Adrenal gland (tissue), 19 donors: ENCODE measurements at regions of chr17 and their contacts with region 1.

Region 1: DNA sequence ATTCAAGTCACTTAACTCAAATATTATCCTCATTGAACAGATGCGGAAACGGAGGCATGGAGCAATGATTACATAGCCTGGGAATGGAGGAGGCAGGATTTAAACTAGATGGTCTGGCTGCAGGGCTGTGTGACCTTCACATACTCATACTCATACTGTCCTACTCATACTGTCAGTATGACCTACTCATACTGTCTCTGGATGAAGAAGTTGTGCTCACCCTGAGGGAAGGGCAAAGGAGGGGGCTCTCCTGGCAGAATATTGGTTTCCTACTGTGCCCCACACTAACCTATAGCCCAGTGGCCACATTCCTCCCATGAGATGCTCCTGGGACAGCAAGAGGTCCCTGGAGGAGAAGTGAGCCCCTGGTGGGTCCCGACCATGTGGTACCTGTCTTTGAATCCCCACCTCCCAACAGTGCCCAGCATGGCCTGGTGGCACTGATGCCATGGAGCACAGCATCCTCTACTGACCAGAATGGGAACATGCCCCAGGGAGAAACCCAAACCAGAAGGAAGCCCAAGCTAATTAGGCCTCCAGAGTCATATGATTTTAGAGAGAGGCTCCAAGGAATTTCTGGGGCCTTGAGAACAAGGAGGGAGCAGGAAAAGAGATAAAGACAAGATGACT is 197.3 kb upstream of the SDK2 start:
- DNase-seq: no peak
- H3K4me3 ChIP-seq: no peak overlapping the region
- H3K27ac ChIP-seq: no peak overlapping the region
- H3K4me1 ChIP-seq: no peaks in the 10 kb centered on the region
- H3K27me3 ChIP-seq: no peaks in the 10 kb centered on the region
- CTCF ChIP-seq: peak in 3 of 6 experiments; percentile 28 to 47 (median 41)
- POLR2A ChIP-seq: no peak

Region 2: DNA sequence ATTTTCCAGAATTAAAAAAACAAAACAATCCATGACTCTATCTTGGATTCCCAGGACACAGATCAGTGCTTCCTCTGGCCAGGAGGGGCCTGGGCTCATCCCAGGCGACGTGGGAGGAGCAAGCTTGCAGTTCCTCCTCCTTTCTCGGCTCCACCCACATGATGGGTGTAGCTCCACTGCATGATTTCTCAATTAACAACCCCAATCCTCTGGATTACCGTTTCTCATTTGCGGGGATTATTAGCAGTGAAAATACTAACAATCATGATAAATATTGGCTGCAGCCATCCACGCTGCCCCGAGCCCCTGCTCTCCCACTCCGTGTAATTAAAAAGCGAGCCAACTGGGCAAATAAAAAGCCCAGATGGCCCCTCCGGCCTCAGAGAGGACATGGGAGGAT is 150.9 kb before region 1 on chr17:
- intact Hi-C with region 1: no loop called
- DNase-seq: no peak
- H3K4me3 ChIP-seq: no peak overlapping the region
- H3K27ac ChIP-seq: no peak overlapping the region
- H3K4me1 ChIP-seq: no peaks in the 10 kb centered on the region
- H3K27me3 ChIP-seq: no peaks in the 10 kb centered on the region
- CTCF ChIP-seq: no peak
- POLR2A ChIP-seq: no peak

Region 3: GRCh38 chr17:73782641-73783381 is 58.7 kb before region 1 on chr17:
- intact Hi-C with region 1: loop called in 1 of 2 experiments (anchors 10 kb)
- DNase-seq: no peak
- H3K4me3 ChIP-seq: no peak overlapping the region
- H3K27ac ChIP-seq: no peak overlapping the region
- H3K4me1 ChIP-seq: no peaks in the 10 kb centered on the region
- H3K27me3 ChIP-seq: peaks cover 9% of the 10 kb centered on the region
- CTCF ChIP-seq: no peak
- POLR2A ChIP-seq: no peak

Region 4: DNA sequence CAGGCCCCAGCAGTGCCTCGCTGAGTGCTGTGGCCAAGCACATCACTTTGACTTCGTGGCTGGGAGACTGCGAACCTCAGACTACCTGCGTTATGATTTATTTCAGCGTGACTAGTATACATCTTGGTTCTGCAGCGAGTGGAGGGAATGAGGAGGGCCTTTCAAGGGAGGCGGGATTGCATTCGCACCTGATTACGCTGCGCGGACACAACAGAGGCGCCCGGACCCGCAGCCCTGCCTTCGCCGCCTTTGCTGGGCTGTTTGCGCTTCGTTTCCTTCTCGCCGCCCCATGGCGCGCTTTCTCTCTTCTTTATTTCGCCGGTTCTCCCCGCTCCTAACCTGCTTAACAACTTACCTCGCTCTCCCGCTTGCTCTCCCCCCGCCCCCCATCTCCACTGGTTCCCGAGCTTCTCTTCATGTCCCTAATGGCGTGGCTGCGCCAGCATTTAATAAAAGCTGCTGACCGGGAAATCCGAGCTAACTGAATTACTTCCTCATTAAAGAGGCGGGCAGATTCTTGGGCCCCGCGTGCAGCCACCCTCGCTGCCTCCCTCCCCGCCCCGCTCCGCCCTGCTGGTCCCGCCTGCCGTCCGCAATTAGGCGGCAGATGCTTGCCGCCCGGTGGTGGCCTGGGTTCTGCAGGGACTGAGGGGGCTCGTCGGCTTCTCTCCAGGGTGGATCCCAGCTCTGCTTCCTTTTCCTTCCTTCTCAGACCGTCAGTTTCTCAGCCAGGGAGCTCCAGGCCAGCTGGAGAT is 60.3 kb after region 1 on chr17:
- intact Hi-C with region 1: no loop called
- DNase-seq: peak in 4 of 7 donors; percentile 22 to 56 (median 24)
- H3K4me3 ChIP-seq: peak overlapping the region in 1 of 4 donors; percentile 42
- H3K27ac ChIP-seq: no peak overlapping the region
- H3K4me1 ChIP-seq: peaks cover 0 to 8% of the 10 kb centered on the region in 2 donors
- H3K27me3 ChIP-seq: peaks cover 6% of the 10 kb centered on the region
- CTCF ChIP-seq: no peak
- POLR2A ChIP-seq: no peak